Right lobe of liver (tissue), 6 donors: ENCODE measurements at regions of chr9 and their contacts with region 1.

Region 1: DNA sequence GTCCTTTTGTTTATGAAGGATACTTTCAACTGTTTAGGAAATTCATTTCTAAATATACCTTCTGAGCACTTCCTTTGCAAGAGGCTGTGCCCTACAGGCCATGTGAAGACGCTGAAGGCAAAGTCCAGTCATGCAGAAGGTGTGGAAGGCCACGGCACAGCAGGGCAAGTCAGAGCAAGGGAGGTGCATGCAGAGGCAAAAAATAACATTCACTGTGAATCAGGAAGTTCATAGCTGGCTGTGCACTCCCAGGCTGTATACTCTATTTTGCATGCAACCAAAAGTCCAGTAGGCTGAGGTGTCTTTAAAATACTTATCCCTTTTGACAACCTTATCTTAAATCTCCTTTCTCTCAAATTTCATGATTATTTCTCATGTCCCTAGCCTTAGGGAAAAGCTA is 50.3 kb downstream of the GNAQ start:
- DNase-seq: no peak
- ATAC-seq: peak; percentile 37 to 67 (median 51)
- H3K4me3 ChIP-seq: no peak overlapping the region
- H3K27ac ChIP-seq: peak overlapping the region in 1 of 3 donors; percentile 7
- H3K4me1 ChIP-seq: peaks cover 0 to 32% (median 6%) of the 10 kb centered on the region in 4 donors
- H3K27me3 ChIP-seq: no peaks in the 10 kb centered on the region
- CTCF ChIP-seq: no peak
- POLR2A ChIP-seq: no peak

Region 2: GRCh38 chr9:78035383-78035993 is 54.2 kb after region 1 on chr9:
- intact Hi-C with region 1: loop called in 1 of 2 experiments (anchors 10 kb)
- DNase-seq: peak in 1 of 3 donors; percentile 63
- ATAC-seq: peak; percentile 38 to 51 (median 44)
- H3K4me3 ChIP-seq: no peak overlapping the region
- H3K27ac ChIP-seq: no peak overlapping the region
- H3K4me1 ChIP-seq: peaks cover 0 to 11% (median 0%) of the 10 kb centered on the region in 4 donors
- H3K27me3 ChIP-seq: no peaks in the 10 kb centered on the region
- CTCF ChIP-seq: peak; percentile 84 to 89 (median 86)
- POLR2A ChIP-seq: no peak